ENCODE measurements at regions of chr1 and their contacts with region 1.

Region 1: GRCh38 chr1:169711469-169712281 is at the start of gene SELL:
- DNase-seq: peak in 4 of 5 donors; percentile 48 to 59 (median 52)
- ATAC-seq: peak; percentile 86 to 96 (median 89)
- H3K4me3 ChIP-seq: peak within 1 kb of the TSS in 9 of 12 donors; percentile 18 to 52 (median 40)
- H3K27ac ChIP-seq: peak within 1 kb of the TSS in 3 of 12 donors; percentile 25 to 55 (median 39)
- H3K4me1 ChIP-seq: peaks cover 0 to 25% (median 0%) of the 10 kb centered on the region in 12 donors
- H3K27me3 ChIP-seq: peaks cover 0 to 12% (median 0%) of the 10 kb centered on the region in 9 donors
- CTCF ChIP-seq: peak; percentile 58 to 81 (median 74)
- POLR2A ChIP-seq: no peak
- total RNA-seq, gene SELL: 1.3 to 10.6 (median 2.4) TPM

Region 2: DNA sequence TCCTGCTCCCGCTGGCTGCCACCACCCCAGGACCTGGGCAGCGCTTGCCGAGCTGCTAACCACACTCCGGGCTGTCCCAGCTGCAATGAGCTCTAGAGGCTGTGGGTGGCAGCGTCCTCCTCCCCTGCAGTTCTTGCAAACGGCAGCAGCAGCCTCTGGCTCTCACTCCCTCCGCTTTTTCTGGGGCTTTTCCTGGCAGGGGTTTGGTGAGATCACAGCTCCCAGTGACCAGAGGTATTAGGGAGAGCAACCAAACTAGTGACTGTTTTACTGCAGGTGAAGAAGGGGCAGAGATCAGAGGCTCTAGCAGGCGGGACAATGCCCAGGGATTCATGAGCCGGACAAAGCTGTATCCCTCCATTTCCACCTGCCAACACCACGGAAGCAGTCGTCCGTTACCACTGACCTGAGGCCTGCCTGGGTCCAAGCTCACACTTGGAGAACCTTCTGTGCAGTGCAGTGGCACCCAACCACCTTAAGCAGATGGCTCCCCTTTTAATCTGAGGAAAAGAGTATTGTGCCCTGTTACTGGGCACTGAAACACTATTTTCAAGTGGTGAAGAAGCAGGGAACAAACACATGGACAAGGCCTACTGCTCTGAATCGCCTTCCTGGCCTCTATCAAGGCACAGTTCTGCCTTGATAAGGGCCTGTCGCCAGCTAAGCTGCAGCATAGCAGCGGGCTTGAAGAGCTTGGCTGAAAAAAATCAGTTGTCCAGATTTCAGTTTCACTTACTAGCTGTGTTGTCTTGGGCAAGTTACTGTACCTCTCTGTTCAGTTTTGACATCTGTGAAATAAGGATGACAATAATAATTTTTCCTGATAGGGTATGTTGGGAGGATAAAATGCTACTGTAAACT is 125.0 kb before region 1 on chr1 and contains the start of gene F5:
- intact Hi-C with region 1: loop called in 1 of 10 experiments (anchors 5 kb)
- DNase-seq: peak; percentile 52 to 88 (median 83)
- ATAC-seq: peak; percentile 96 to 99 (median 98)
- H3K4me3 ChIP-seq: peak within 1 kb of the TSS in 11 of 12 donors; percentile 14 to 61 (median 36)
- H3K27ac ChIP-seq: peak within 1 kb of the TSS in 8 of 12 donors; percentile 11 to 85 (median 52)
- H3K4me1 ChIP-seq: peaks cover 0 to 23% (median 9%) of the 10 kb centered on the region in 12 donors
- H3K27me3 ChIP-seq: peaks cover 0 to 37% (median 0%) of the 10 kb centered on the region in 9 donors
- CTCF ChIP-seq: peak in 11 of 12 donors; percentile 17 to 63 (median 47)
- POLR2A ChIP-seq: peak in 1 of 2 donors; percentile 46
- total RNA-seq, gene F5: 0.93 to 43.3 (median 18.0) TPM

Region 3: GRCh38 chr1:169595764-169596711 is 115.6 kb before region 1 on chr1:
- intact Hi-C with region 1: loop called (anchors 1 to 5 kb)
- DNase-seq: no peak
- ATAC-seq: peak in 2 of 4 donors; percentile 24 to 56
- H3K4me3 ChIP-seq: no peak overlapping the region
- H3K27ac ChIP-seq: no peak overlapping the region
- H3K4me1 ChIP-seq: no peaks in the 10 kb centered on the region
- H3K27me3 ChIP-seq: peaks cover 0 to 8% (median 0%) of the 10 kb centered on the region in 9 donors
- CTCF ChIP-seq: no peak
- POLR2A ChIP-seq: no peak

Region 4: GRCh38 chr1:169601093-169601881 is 110.4 kb before region 1 on chr1:
- intact Hi-C with region 1: loop called (anchors 1 to 5 kb)
- DNase-seq: no peak
- ATAC-seq: peak in 1 of 4 donors; percentile 54
- H3K4me3 ChIP-seq: no peak overlapping the region
- H3K27ac ChIP-seq: no peak overlapping the region
- H3K4me1 ChIP-seq: peaks cover 0 to 22% (median 0%) of the 10 kb centered on the region in 12 donors
- H3K27me3 ChIP-seq: peaks cover 0 to 8% (median 0%) of the 10 kb centered on the region in 9 donors
- CTCF ChIP-seq: peak; percentile 29 to 60 (median 47)
- POLR2A ChIP-seq: no peak

Region 5: GRCh38 chr1:169809370-169810095 is 97.9 kb after region 1 on chr1:
- intact Hi-C with region 1: loop called in 3 of 10 experiments (anchors 5 to 10 kb)
- DNase-seq: no peak
- ATAC-seq: peak in 1 of 4 donors; percentile 22
- H3K4me3 ChIP-seq: no peak overlapping the region
- H3K27ac ChIP-seq: no peak overlapping the region
- H3K4me1 ChIP-seq: no peaks in the 10 kb centered on the region
- H3K27me3 ChIP-seq: no peaks in the 10 kb centered on the region
- CTCF ChIP-seq: peak; percentile 44 to 75 (median 60)
- POLR2A ChIP-seq: no peak

Region 6: GRCh38 chr1:169941982-169942830 is 230.5 kb after region 1 on chr1:
- intact Hi-C with region 1: no loop called
- DNase-seq: no peak
- ATAC-seq: no peak
- H3K4me3 ChIP-seq: no peak overlapping the region
- H3K27ac ChIP-seq: no peak overlapping the region
- H3K4me1 ChIP-seq: peaks cover 0 to 11% (median 0%) of the 10 kb centered on the region in 12 donors
- H3K27me3 ChIP-seq: no peaks in the 10 kb centered on the region
- CTCF ChIP-seq: no peak
- POLR2A ChIP-seq: no peak